MCF 10A (cell line): ENCODE measurements at regions of chr12 and their contacts with region 1.

Region 1: DNA sequence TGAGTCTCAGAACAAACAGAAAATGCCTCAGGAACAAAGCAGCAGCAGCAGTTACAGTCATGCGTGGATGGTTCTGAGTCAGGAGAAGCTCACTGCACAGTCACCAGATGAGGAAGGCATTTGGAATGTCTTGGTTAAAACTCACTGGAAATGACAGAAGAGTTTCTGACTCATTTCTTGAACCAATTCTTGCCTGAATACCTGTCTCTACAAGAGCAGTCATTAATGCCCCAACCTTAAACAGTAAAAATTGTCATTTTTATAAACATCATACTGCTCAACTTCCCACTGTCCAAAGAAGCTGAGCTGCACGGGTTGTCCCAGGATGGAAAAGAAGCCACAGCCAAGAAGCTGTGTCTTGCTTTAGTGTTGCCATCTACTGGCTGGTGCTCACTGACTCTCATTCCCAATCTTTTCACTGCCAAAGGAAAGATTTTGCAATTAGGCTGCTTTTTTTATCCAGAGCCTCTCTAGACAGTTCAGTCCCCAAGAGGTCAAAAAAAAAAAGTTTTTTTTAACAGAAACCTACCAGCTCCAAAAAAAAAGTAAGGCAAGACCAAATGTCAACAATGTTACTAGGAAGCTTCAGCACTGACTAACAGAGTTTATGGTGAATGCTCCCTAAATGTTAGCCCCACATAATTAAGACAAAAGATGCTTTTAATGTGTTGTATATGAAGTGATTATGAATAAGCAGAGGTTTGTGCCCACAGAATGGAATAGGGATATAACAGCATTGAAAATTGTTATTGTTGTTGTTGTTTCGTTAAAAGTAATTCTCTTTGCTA is 40.4 kb downstream of the KICS2 start:
- DNase-seq: peak; percentile 95
- H3K4me3 Mint-ChIP-seq: peak overlapping the region; percentile 17
- H3K27ac Mint-ChIP-seq: peak overlapping the region; percentile 92
- H3K4me1 Mint-ChIP-seq: peaks cover 49% of the 10 kb centered on the region
- H3K27me3 Mint-ChIP-seq: no peaks in the 10 kb centered on the region
- CTCF ChIP-seq: peak; percentile 56

Region 2: GRCh38 chr12:64083285-64084210 is 98.2 kb before region 1 on chr12:
- CTCF ChIA-PET with region 1: interaction called, 14 read pairs
- POLR2A ChIA-PET with region 1: interaction called, 16 read pairs
- intact Hi-C with region 1: loop called (anchors 2 kb)
- DNase-seq: peak; percentile 86
- H3K4me3 Mint-ChIP-seq: peak overlapping the region; percentile 41
- H3K27ac Mint-ChIP-seq: peak overlapping the region; percentile 57
- H3K4me1 Mint-ChIP-seq: peaks cover 23% of the 10 kb centered on the region
- H3K27me3 Mint-ChIP-seq: no peaks in the 10 kb centered on the region
- CTCF ChIP-seq: no peak

Region 3: DNA sequence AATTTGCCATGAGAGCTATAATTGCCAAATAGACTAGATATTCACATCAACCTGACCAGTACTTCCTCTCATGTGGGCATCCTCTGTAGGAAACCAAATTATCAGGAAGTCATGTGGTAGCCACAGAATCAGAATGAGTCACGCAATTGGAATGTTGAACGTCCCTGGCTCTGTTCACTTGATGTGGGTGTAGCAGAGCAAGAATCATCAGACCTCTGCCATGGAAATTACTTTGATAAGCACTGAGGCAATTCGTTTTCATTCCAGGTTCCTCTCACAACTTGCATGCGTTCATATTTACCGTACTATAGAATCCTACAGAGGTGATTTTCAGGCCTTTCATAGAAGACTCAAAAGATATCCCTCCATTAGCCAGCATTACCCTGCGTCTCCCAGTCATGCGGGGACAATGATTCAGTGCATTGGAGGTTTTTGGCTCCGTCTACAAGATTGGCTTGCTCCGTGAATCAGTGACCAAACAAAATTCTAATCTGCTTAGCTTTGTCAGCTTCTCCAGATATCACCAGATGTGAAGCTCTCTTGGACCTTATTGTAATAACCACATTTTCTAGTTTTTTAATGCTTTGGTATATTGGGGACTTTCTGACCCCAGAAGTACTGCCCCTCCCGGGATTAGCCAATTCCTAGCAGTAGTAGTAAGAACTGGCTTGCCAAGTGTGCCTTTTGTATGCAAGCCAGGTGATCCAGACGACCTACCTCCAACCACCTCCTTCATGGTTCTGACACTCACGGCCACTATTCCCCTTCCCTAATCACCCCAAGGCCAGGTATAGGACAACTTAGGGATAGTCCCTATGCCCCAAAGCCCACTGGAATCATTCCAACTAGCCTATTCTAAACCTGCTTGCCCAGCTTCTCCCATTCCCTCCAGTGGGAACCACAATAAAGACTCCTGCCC is 93.0 kb before region 1 on chr12:
- CTCF ChIA-PET with region 1: interaction called, 14 read pairs
- POLR2A ChIA-PET with region 1: interaction called, 16 read pairs
- intact Hi-C with region 1: loop called (anchors 2 kb)
- DNase-seq: peak; percentile 94
- H3K4me3 Mint-ChIP-seq: peak overlapping the region; percentile 73
- H3K27ac Mint-ChIP-seq: peak overlapping the region; percentile 99
- H3K4me1 Mint-ChIP-seq: peaks cover 23% of the 10 kb centered on the region
- H3K27me3 Mint-ChIP-seq: no peaks in the 10 kb centered on the region
- CTCF ChIP-seq: no peak

Region 4: GRCh38 chr12:64137117-64137516 is 44.6 kb before region 1 on chr12:
- CTCF ChIA-PET with region 1: interaction called, 3 read pairs
- POLR2A ChIA-PET with region 1: interaction called, 3 read pairs
- intact Hi-C with region 1: loop called (anchors 5 kb)
- DNase-seq: no peak
- H3K4me3 Mint-ChIP-seq: no peak overlapping the region
- H3K27ac Mint-ChIP-seq: no peak overlapping the region
- H3K4me1 Mint-ChIP-seq: peaks cover 4% of the 10 kb centered on the region
- H3K27me3 Mint-ChIP-seq: no peaks in the 10 kb centered on the region
- CTCF ChIP-seq: no peak

Region 5: DNA sequence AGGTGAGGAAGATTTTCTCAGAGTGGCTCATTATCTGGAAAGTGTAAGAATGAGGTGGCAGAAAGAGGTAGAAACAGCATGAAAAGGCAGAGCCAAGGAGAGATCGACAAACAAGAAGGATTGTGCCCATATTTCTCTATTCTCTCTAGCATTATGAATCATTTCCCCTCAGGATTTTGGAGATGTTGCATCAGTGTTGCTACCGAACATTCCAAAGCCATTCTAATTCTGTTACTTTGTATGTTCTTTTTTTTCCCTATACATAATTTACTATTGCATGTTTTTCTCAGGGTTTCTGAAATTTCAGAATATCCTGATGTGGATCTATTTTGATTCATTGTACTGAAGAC is 21.0 kb before region 1 on chr12:
- CTCF ChIA-PET with region 1: interaction called, 4 read pairs
- POLR2A ChIA-PET with region 1: interaction called, 22 read pairs
- intact Hi-C with region 1: loop called (anchors 2 kb)
- DNase-seq: peak; percentile 80
- H3K4me3 Mint-ChIP-seq: peak overlapping the region; percentile 35
- H3K27ac Mint-ChIP-seq: peak overlapping the region; percentile 91
- H3K4me1 Mint-ChIP-seq: peaks cover 28% of the 10 kb centered on the region
- H3K27me3 Mint-ChIP-seq: no peaks in the 10 kb centered on the region
- CTCF ChIP-seq: no peak

Region 6: DNA sequence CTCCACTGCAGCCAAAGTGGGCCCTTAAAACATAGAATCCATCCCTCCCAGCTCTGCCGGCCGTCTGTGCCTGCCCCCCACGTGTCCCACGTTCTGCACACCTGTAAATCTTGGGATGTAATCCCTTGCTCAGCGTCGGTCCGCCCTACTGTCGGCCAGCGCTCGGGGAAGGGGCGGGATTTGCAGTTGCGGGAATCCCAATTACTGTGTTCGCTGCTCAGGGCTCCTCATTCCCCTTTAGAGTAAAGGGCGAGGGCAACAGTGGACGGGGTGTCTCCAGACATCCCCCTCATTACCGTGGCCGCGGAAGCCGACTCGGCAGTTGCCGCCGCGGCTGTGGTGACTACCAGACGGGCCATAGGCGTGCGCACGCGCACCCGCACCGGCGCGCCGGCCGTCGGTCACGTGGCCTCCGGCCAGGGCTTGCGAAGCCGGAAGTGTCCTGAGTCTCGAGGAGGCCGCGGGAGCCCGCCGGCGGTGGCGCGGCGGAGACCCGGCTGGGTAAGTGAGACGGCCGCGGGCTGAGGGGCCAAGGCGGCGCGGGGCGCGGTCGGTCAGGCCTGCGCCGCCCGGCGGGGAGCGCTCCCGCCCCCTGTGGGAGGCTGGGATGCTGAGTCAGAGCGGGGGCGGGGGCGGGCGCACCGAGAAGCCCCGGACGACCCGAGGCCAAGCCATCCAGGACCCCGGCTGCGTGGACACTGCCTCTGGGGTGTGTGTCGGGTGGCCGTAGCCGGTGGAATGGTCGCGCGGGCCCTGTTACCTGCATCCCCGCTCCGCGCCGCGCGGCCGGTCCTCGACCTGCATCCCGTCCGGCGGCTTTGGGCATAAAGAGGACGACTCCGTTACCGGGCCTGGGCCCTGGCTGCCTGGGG is 270.2 kb after region 1 on chr12 and contains the start of gene TBK1:
- CTCF ChIA-PET with region 1: no interaction called
- POLR2A ChIA-PET with region 1: no interaction called
- intact Hi-C with region 1: loop called (anchors 5 kb)
- DNase-seq: peak; percentile 81
- H3K4me3 Mint-ChIP-seq: peak within 1 kb of the TSS; percentile 84
- H3K27ac Mint-ChIP-seq: peak within 1 kb of the TSS; percentile 96
- H3K4me1 Mint-ChIP-seq: no peaks in the 10 kb centered on the region
- H3K27me3 Mint-ChIP-seq: no peaks in the 10 kb centered on the region
- CTCF ChIP-seq: no peak
- total RNA-seq, gene TBK1: 19.6 and 23.0 TPM in 2 replicates

Region 7: GRCh38 chr12:64480148-64480547 is 298.4 kb after region 1 on chr12:
- CTCF ChIA-PET with region 1: no interaction called
- POLR2A ChIA-PET with region 1: no interaction called
- intact Hi-C with region 1: no loop called
- DNase-seq: peak; percentile 11
- H3K4me3 Mint-ChIP-seq: no peak overlapping the region
- H3K27ac Mint-ChIP-seq: no peak overlapping the region
- H3K4me1 Mint-ChIP-seq: no peaks in the 10 kb centered on the region
- H3K27me3 Mint-ChIP-seq: no peaks in the 10 kb centered on the region
- CTCF ChIP-seq: no peak